ENCODE measurements at regions of chr1 and their contacts with region 1.

Region 1: DNA sequence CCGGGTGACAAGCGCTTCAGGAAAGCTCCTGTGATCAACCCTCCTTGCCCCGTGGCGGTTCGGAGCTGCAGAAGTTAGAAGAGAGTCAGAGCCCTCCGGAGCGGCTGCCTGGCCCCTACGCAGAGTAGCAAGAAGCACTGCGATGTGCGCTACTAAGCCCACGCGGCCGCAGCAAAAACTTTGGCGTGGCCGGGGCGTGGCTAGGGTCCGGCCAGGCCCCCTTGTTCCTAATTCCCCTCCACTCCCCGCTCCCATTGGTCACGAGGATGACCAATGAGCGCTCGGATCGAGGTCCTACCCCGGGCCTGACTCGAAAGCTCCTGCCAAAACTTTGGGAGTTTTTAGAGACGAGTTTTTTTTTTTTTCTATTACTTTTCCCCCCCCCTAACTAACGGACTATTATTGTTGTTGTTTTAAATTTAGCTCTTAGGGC is at the start of gene HLX:
- DNase-seq: peak; percentile 88
- CTCF ChIP-seq: no peak

Region 2: GRCh38 chr1:220926146-220926545 is 47.1 kb after region 1 on chr1:
- in situ Hi-C with region 1: no loop called
- DNase-seq: no peak
- CTCF ChIP-seq: no peak

Region 3: GRCh38 chr1:220983877-220984635 is 105.0 kb after region 1 on chr1:
- in situ Hi-C with region 1: no loop called
- DNase-seq: no peak
- CTCF ChIP-seq: no peak

Region 4: DNA sequence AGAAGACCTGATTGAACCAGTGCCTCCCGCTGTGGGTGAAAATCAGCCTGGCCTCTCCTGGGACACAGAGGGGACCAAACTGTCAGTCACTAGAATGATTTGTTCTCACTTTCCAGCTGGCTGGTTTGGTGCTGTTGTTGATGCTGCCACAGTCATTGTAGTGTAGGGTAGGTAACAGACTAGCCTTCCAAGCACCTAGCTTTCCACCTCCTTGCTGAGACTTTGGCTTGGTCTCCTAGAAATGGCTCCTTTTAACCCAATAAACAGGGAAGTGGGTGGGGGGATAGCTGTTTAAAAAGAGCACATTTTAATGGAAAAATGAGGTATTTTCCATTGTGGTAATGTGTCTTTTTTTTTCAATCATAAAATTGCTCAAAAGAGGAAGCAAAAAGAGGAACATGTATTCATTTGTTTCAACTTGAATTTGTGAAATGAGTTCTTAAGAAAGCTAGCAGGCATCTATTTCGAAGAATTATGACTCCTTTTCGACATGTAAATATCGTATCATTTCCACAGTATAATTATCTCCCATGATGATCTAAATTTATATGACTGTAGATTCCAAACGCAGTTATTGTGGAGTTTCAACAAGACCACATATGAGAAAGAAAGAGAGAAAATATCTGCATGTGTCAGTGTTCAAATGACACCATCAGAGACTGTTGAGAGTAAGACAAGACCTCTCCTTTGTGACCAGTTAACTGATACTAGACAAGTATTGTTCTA is 190.2 kb after region 1 on chr1:
- in situ Hi-C with region 1: no loop called
- DNase-seq: peak; percentile 40
- CTCF ChIP-seq: no peak

Region 5: GRCh38 chr1:221203224-221204054 is 324.3 kb after region 1 on chr1:
- in situ Hi-C with region 1: loop called (anchors 10 kb)
- DNase-seq: peak; percentile 56
- CTCF ChIP-seq: peak; percentile 94

Measured in GM13977 (cell line).